ENCODE measurements at regions of chr4 and their contacts with region 1.

Region 1: DNA sequence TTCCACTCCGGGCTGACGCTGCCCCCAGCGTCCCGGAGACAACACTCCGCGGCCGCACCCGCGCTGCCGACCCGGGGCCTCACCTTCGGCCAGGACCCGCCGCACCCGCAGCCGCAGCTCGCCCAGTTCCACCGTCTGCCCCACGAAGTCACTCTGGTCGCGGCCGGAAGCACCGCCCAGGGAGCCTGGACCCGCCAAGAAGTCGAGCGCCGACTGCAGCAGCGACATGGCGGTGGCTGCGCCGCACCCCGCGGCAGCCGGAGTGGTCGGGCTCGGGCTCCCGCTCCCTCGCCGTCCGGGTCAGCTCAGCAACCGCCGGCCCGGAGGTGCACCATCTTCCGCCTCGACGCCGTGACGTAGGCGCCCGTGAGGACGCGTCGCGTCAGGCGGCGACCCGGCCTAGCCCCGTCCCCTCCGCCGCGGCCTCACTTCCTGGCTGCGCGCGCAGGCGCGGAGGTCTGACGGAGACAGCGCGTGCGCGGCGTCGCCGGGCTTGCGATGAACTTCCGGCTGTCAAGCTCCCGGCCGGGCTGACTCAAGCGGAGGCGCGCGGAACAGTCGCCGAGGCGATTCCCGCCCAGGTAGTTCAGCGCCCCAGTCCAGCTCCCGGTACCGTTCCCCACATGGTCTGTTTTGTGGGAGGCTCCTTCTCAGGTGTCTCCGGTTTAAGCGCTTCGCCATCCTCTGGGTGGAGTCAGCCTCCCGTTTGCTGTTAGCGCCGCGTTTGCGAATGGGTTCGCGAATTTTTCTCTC is at the starts of genes GAK and TMEM175:
- DNase-seq: peak; percentile 99
- H3K4me3 Mint-ChIP-seq: peak within 1 kb of the TSS; percentile 97
- H3K27ac Mint-ChIP-seq: peak within 1 kb of the TSS; percentile 90
- H3K4me1 Mint-ChIP-seq: peaks cover 34% of the 10 kb centered on the region
- H3K27me3 Mint-ChIP-seq: no peaks in the 10 kb centered on the region
- total RNA-seq, gene GAK: 146 and 149 TPM in 2 replicates
- total RNA-seq, gene TMEM175: 15.4 and 16.2 TPM in 2 replicates

Region 2: DNA sequence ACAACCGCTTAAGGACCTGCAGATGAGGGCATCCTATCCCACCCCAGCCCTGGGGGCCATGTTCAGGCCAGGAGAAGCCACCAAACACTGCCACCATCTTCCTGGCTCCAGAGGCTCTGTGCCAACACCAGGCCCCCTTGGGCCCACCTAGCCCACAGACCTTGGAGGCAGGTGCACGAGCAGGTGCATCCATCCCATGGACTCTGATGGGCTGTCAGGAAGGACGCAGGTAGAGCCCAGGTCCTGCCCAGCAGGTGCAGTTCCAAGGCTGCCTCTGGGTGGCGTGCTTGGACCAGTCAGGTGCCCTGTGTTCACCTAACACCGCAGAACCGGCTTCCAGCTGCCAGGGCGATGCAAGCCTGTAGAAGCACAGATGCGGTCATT is 329.6 kb before region 1 on chr4:
- intact Hi-C with region 1: loop called (anchors 5 kb)
- DNase-seq: peak; percentile 23
- H3K4me3 Mint-ChIP-seq: no peak overlapping the region
- H3K27ac Mint-ChIP-seq: no peak overlapping the region
- H3K4me1 Mint-ChIP-seq: peaks cover 7% of the 10 kb centered on the region
- H3K27me3 Mint-ChIP-seq: peaks cover 3% of the 10 kb centered on the region

Region 3: GRCh38 chr4:705278-706082 is 226.7 kb before region 1 on chr4 and contains the start of gene PCGF3:
- intact Hi-C with region 1: loop called (anchors 1 kb)
- DNase-seq: peak; percentile 95
- H3K4me3 Mint-ChIP-seq: peak within 1 kb of the TSS; percentile 83
- H3K27ac Mint-ChIP-seq: peak within 1 kb of the TSS; percentile 83
- H3K4me1 Mint-ChIP-seq: peaks cover 27% of the 10 kb centered on the region
- H3K27me3 Mint-ChIP-seq: peaks cover 2% of the 10 kb centered on the region
- total RNA-seq, gene PCGF3: 30.4 and 31.0 TPM in 2 replicates

Region 4: DNA sequence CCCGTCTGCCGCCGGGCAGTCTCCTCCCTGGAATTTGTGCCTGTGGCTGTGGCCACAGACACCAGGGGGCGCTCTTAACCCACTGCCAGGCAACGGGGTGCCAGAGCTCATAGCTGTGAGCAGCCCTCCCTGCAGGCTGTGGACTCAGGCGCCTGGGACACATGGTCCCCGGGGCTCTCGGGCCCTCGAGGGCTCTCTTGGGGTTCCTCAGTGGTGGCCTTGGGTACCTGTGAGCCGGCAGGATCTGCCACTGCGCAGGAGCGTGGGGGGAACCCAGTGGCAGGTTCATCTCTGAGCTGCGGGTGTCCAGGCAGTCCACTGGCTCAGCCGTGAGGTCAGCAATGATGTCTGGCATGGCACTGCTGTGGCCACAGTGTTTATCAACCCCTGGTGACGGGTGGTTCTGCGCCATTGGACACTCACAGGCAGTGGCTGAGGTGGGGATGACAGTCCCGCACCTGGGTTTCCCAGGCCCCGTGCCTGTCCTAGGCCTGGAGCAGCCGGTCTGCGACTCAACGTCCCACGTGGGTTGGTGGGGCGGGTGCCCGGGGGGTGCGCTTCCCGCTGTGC is 189.3 kb before region 1 on chr4:
- intact Hi-C with region 1: loop called (anchors 5 kb)
- DNase-seq: peak; percentile 63
- H3K4me3 Mint-ChIP-seq: no peak overlapping the region
- H3K27ac Mint-ChIP-seq: no peak overlapping the region
- H3K4me1 Mint-ChIP-seq: no peaks in the 10 kb centered on the region
- H3K27me3 Mint-ChIP-seq: no peaks in the 10 kb centered on the region

Region 5: DNA sequence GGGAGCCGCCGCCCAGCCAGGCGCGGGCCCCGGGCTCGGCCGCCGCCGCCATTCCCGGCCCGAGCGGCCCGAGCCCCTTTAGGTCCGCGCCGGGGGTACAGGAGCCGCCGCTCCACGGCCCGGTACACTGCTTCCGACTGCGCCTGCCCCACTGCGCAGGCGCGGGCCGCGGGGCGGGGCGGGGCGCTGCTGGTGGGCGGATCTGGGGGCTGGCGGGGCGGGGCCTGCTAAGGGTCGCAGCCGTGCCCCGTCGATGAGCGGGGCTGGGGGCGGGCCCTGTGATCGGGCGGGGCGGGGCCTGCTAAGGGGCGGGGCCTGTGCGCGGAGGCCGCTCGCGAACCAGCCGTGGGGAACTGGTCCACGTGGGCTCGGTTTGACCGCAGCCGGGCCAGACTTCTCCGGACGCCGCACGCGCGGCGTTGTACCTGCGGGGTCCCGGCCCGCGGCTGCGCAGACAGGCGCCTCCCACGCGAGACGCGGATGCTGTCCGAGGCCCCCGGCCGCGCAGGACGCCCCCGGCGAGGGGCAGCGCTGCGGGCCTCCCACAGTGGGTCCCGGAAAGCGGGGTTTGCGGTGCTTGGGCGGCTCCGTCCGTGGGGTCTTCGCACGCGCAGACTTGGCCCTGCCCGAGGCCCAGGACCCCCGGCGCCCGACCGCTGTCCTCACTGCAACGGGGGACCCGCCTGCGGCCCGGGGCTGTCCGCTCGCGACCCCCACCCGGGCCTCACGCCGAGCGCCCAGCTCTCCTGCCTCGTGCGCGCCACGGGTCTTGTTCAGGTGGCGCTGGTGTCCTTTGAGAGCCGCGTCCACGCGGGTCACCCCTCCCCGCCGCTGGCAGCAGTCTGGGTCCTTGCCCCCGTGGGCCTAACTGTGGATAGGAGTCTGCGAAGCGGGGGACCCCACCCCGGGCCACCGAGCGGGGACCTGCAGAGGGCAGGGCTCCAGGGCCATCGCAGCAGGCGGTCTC is 41.6 kb after region 1 on chr4 and contains the start of gene DGKQ:
- intact Hi-C with region 1: loop called (anchors 1 kb)
- DNase-seq: peak; percentile 80
- H3K4me3 Mint-ChIP-seq: peak within 1 kb of the TSS; percentile 51
- H3K27ac Mint-ChIP-seq: no peak within 1 kb of the TSS
- H3K4me1 Mint-ChIP-seq: no peaks in the 10 kb centered on the region
- H3K27me3 Mint-ChIP-seq: no peaks in the 10 kb centered on the region
- total RNA-seq, gene DGKQ: 17.8 and 18.0 TPM in 2 replicates

Region 6: DNA sequence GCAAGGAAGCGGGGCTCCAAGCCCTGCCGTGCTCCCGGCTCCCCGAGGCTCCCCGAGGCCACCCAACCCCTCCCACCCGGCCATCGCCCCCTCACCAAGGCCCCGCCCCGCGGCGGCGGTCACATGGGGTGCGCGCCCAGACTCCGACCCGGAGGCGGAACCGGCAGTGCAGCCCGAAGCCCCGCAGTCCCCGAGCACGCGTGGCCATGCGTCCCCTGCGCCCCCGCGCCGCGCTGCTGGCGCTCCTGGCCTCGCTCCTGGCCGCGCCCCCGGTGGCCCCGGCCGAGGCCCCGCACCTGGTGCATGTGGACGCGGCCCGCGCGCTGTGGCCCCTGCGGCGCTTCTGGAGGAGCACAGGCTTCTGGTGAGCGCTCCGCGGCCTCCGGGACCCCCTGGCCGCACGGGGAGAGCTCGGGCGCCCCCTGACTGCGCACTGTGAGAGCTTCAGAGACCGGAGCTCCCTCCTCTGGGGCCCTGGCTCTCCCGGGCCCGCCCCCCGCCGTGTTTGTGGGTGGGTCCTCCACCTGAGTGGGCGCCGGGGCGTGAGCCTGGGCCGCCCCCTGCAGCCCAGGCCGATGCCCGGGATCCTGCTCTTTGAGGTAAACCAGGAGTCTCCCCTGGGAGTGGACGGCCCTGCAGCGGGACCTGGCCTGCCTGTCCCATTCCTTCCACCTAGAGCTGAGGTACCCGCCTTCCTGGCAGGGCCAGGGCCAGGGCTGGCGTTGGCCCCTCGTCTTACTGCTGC is 54.9 kb after region 1 on chr4 and contains the start of gene IDUA:
- intact Hi-C with region 1: loop called (anchors 1 kb)
- DNase-seq: peak; percentile 84
- H3K4me3 Mint-ChIP-seq: peak within 1 kb of the TSS; percentile 88
- H3K27ac Mint-ChIP-seq: peak within 1 kb of the TSS; percentile 81
- H3K4me1 Mint-ChIP-seq: peaks cover 17% of the 10 kb centered on the region
- H3K27me3 Mint-ChIP-seq: no peaks in the 10 kb centered on the region
- total RNA-seq, gene IDUA: 33.8 and 34.3 TPM in 2 replicates

Region 7: DNA sequence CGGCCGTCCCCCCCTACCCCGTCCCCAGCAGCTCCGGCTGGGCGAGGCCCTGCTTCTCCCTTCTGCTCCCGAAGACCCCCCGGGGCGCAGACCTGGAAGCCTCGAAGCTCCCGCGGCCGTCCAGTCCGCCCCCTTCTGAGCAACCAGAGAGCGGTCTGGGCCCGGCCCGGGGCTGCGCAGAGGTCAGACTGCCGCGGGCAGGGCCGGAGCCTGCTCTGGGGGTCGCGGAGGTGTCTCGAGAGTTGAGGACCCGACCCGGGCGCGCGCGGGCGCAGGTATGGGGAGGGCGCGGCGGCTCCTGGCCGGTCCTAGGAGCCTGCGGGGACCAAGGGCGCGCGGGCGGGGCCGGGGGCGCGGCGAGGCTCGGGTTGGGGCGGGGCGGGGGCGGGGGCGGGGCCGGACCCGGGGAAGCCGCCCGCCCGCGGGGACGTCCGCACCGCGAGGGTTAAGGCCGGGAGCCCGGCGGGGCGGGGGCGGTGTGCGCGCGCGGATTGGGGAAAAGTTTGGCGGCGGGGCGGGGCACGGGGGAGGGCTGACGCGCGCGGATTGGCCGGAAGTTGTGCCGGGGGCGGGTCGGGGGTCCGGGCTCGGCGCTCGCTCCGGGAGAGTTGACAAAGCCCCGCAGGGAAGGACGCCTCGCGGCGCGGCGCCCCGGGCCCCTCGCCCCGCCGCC is 79.0 kb after region 1 on chr4 and contains the start of gene FGFRL1:
- intact Hi-C with region 1: no loop called
- DNase-seq: peak; percentile 89
- H3K4me3 Mint-ChIP-seq: peak within 1 kb of the TSS; percentile 86
- H3K27ac Mint-ChIP-seq: peak within 1 kb of the TSS; percentile 89
- H3K4me1 Mint-ChIP-seq: peaks cover 15% of the 10 kb centered on the region
- H3K27me3 Mint-ChIP-seq: peaks cover 28% of the 10 kb centered on the region
- total RNA-seq, gene FGFRL1: 15.5 TPM in 2 replicates

Measured in activated T-helper 1 cell treated with anti-CD3 and anti-CD28 coated beads, Interleukin-12 subunit alpha, Interleukin-12 subunit beta, Interleukin-2, Interleukin-4 antibody, amounts not matched to agents 30 ng/mL and 10 ng/mL and 1 ng/mL, durations not matched to agents 14 hours and 24 hours and 36 hours (primary cell).